ENCODE measurements at regions of chr1 and their contacts with region 1.

Region 1: DNA sequence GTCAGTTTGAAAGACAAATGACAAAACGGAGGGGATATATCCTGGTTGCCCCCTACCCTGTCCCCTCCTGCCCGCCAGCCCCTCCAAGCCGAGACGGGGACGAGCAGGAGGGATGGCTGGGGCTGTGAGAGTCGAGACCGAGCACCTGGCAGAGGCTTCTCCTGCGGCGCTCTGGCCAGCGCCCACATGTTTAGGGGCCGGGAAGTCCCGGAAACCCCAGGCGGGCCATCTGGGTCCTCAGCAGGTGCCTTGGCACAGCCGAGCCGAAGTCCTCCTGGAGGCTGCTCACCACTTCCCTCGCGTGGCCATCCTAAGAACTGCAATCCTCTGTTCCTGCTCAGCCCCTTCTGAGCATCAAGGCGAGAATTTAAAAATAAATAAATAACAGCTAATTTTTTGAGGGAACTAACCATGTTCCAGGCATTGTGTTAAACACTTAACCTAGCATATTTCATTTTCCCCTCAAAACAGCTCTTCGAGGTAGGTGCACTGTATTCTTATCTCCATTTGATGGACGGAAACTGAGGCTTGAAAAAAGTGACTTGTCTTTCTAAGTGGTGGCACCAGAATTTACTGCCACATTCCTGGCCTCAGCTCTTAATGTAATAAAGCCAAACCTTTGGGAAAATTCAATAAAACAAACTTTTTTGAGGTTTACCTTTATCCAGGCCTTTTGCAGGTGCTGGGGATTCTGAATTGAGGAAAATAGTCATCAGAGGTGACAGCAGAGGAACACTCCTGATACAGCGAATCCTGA is 3.5 kb upstream of the RIMS3 start:
- DNase-seq: peak; percentile 88
- H3K4me3 ChIP-seq: no peak overlapping the region
- H3K27ac ChIP-seq: no peak overlapping the region
- H3K4me1 ChIP-seq: peaks cover 4% of the 10 kb centered on the region
- H3K27me3 ChIP-seq: no peaks in the 10 kb centered on the region
- CTCF ChIP-seq: peak; percentile 96

Region 2: GRCh38 chr1:40612345-40612831 is 56.6 kb before region 1 on chr1:
- intact Hi-C with region 1: loop called (anchors 5 kb)
- DNase-seq: peak; percentile 88
- H3K4me3 ChIP-seq: no peak overlapping the region
- H3K27ac ChIP-seq: no peak overlapping the region
- H3K4me1 ChIP-seq: no peaks in the 10 kb centered on the region
- H3K27me3 ChIP-seq: no peaks in the 10 kb centered on the region
- CTCF ChIP-seq: peak; percentile 86

Region 3: DNA sequence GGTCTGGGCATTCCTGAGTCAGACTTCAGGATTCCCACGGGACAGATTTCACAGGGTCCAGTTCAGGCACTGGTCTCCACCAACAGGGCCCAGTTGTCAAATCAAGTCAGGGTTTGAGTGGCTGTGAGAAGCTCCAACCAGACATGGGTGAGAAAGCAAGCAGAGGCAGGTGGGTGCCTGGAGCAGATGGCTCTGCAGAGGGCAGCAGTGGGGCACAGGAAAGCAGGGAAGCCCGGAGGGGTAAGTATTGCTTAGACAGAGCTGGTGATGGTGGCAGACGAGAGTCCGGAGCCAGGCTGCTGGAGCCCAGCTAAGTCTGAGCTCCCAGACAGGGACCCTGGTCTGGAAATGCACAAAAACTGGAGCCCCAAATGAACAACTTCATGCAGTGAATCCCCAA is 43.9 kb before region 1 on chr1:
- intact Hi-C with region 1: loop called (anchors 5 kb)
- DNase-seq: peak; percentile 59
- H3K4me3 ChIP-seq: no peak overlapping the region
- H3K27ac ChIP-seq: no peak overlapping the region
- H3K4me1 ChIP-seq: peaks cover 3% of the 10 kb centered on the region
- H3K27me3 ChIP-seq: no peaks in the 10 kb centered on the region
- CTCF ChIP-seq: peak; percentile 39

Region 4: DNA sequence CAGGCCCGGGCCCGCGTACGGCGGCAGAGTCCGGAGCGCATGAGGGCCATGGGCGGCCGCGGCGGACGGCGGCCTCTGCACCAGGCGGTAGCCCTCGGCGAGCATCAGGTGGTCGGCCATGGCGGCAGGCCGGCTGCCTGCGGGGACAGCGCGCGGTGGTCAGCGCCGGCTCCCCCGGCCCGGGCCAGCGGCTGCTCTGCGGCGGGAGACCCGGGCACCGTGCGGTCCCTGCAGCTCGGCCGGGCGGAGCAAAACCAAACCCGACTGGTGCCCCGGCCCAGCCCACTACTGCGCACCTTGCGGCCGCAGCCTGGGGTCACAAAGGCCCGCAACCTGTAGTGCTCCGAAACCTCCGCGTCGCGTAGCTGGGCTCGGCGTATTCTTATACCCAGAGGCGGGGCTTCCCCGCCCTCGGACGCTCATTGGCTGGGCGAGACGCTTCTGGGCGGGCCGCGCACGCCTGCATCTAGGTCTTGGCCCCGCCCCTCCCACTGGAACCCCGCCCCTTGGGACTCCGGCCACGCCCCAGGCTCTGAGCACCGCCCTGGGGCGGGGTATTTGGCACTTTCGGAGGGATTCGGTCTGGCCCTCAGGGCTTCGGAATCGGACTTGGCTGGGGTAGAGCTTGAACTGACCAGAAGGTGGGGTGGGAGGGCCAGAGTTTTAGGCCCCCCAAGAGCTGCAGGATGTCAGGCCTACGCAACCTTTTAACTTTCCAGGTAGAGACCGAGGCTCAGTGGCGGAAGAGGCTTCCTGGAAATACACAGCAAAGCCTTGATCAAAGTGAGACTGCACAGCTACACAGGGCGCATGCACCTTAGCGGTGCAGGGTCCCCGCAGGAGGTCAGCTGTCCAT is 193.3 kb after region 1 on chr1 and contains the start of gene CITED4:
- intact Hi-C with region 1: loop called (anchors 5 kb)
- DNase-seq: peak; percentile 95
- H3K4me3 ChIP-seq: peak within 1 kb of the TSS; percentile 73
- H3K27ac ChIP-seq: peak within 1 kb of the TSS; percentile 16
- H3K4me1 ChIP-seq: no peaks in the 10 kb centered on the region
- H3K27me3 ChIP-seq: peaks cover 10% of the 10 kb centered on the region
- CTCF ChIP-seq: no peak
- total RNA-seq, gene CITED4: 3.4 to 5.8 TPM

Measured in colonic mucosa (tissue), 4 donors.